Prostate gland (tissue), 2 donors: ENCODE measurements at regions of chr10 and their contacts with region 1.

Region 1: GRCh38 chr10:63629363-63630084 is 108.3 kb downstream of the REEP3 start:
- DNase-seq: peak; percentile 96
- H3K4me3 ChIP-seq: peak overlapping the region; percentile 53 to 57
- H3K27ac ChIP-seq: peak overlapping the region; percentile 96 to 98
- H3K4me1 ChIP-seq: peaks cover 7% of the 10 kb centered on the region
- H3K27me3 ChIP-seq: no peaks in the 10 kb centered on the region
- CTCF ChIP-seq: peak; percentile 47 to 74 (median 66)
- POLR2A ChIP-seq: peak; percentile 9

Region 2: DNA sequence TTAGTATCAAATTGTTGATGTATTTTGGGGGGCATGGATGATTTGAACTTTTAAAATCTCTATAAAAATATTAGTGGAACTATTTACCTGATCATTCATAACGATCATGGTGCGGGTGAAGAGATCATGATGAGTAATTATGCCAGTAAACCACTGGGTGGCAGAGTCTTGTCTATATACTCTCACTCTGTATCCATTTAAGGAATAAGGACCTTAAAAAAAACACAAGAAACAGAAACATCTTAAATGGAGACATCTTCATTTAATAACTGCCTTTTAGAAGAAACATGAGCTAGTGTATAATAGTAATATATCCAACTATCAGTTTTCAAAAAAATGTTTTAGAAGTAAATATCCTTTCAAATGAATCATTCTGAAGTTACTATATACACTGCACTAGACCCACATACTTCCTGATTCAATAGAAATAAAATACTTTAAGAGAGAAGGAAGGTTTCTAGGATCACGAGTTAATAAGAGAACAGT is 412.4 kb before region 1 on chr10:
- intact Hi-C with region 1: loop called (anchors 5 kb)
- DNase-seq: peak; percentile 44
- H3K4me3 ChIP-seq: no peak overlapping the region
- H3K27ac ChIP-seq: no peak overlapping the region
- H3K4me1 ChIP-seq: no peaks in the 10 kb centered on the region
- H3K27me3 ChIP-seq: no peaks in the 10 kb centered on the region
- CTCF ChIP-seq: peak in 3 of 4 experiments; percentile 68 to 80 (median 77)
- POLR2A ChIP-seq: no peak

Region 3: GRCh38 chr10:63521416-63522276 is 107.9 kb before region 1 on chr10:
- intact Hi-C with region 1: loop called (anchors 2 kb)
- DNase-seq: peak; percentile 51
- H3K4me3 ChIP-seq: peak overlapping the region; percentile 73 to 76
- H3K27ac ChIP-seq: peak overlapping the region; percentile 98
- H3K4me1 ChIP-seq: peaks cover 8% of the 10 kb centered on the region
- H3K27me3 ChIP-seq: no peaks in the 10 kb centered on the region
- CTCF ChIP-seq: no peak
- POLR2A ChIP-seq: peak; percentile 14

Region 4: GRCh38 chr10:63681993-63682697 is 52.6 kb after region 1 on chr10:
- intact Hi-C with region 1: loop called (anchors 5 kb)
- DNase-seq: peak; percentile 46
- H3K4me3 ChIP-seq: no peak overlapping the region
- H3K27ac ChIP-seq: peak overlapping the region in 1 of 2 donors; percentile 60
- H3K4me1 ChIP-seq: no peaks in the 10 kb centered on the region
- H3K27me3 ChIP-seq: no peaks in the 10 kb centered on the region
- CTCF ChIP-seq: no peak
- POLR2A ChIP-seq: no peak

Region 5: GRCh38 chr10:63738410-63738809 is 108.9 kb after region 1 on chr10:
- intact Hi-C with region 1: no loop called
- DNase-seq: no peak
- H3K4me3 ChIP-seq: no peak overlapping the region
- H3K27ac ChIP-seq: no peak overlapping the region
- H3K4me1 ChIP-seq: no peaks in the 10 kb centered on the region
- H3K27me3 ChIP-seq: no peaks in the 10 kb centered on the region
- CTCF ChIP-seq: no peak
- POLR2A ChIP-seq: no peak